Activated T-helper 1 cell treated with anti-CD3 and anti-CD28 coated beads, Interleukin-12 subunit alpha, Interleukin-12 subunit beta, Interleukin-2, Interleukin-4 antibody, amounts not matched to agents 30 ng/mL and 10 ng/mL and 1 ng/mL, durations not matched to agents 14 hours and 24 hours and 36 hours (primary cell): ENCODE measurements at regions of chr2 and their contacts with region 1.

Region 1: DNA sequence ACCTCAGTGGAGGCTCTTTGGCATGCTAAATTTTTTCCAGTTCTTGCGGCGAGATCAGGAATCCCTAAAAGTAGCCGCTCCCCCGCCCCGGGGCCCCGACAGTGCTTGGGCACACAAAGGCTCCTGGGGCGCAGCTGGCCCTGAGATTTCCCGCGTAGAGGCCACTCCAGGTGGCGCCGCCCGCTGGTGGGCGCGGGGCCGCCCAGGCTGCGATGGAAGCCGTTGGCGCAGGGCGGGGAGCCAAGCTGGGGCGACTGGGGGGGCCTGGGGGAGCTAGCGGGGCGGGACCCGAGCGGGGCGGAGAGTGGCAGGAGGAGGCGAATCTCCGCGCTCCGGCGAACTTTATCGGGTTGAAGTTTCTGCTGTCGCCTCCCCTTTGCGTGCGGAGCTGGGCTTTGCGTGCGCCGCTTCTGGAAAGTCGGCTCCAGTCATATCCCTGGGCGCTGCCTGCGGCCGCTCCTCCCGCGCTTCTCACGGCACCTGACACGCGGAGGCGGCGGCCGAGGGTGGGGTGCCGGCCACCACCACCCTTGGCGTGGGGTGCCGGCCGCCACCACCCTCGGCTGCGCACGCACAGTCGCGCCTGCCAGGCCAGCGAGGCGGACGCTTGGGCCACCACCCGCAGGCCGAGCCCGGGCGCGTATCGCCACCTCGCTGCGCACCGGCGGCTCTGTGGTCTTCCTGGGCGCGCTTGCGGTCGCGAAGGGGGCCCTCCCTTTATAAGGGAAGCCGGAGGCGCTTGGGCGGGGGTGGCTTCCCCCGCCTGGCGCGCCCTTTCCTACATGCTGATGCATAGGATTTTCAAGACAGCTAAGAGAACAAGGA is 867 bp upstream of the CYP1B1 start:
- DNase-seq: peak; percentile 63
- H3K4me3 Mint-ChIP-seq: peak overlapping the region; percentile 80
- H3K27ac Mint-ChIP-seq: peak overlapping the region; percentile 84
- H3K4me1 Mint-ChIP-seq: peaks cover 51% of the 10 kb centered on the region
- H3K27me3 Mint-ChIP-seq: peaks cover 38% of the 10 kb centered on the region

Region 2: GRCh38 chr2:37925063-37925897 is 151.5 kb before region 1 on chr2 and contains the start of gene RMDN2:
- intact Hi-C with region 1: loop called (anchors 10 kb)
- DNase-seq: peak; percentile 70
- H3K4me3 Mint-ChIP-seq: peak within 1 kb of the TSS; percentile 88
- H3K27ac Mint-ChIP-seq: peak within 1 kb of the TSS; percentile 76
- H3K4me1 Mint-ChIP-seq: peaks cover 9% of the 10 kb centered on the region
- H3K27me3 Mint-ChIP-seq: peaks cover 40% of the 10 kb centered on the region
- total RNA-seq, gene RMDN2: 1.3 and 2.2 TPM in 2 replicates

Region 3: GRCh38 chr2:38037757-38038621 is 38.8 kb before region 1 on chr2:
- intact Hi-C with region 1: loop called (anchors 1 kb)
- DNase-seq: peak; percentile 5
- H3K4me3 Mint-ChIP-seq: peak overlapping the region; percentile 71
- H3K27ac Mint-ChIP-seq: peak overlapping the region; percentile 91
- H3K4me1 Mint-ChIP-seq: peaks cover 22% of the 10 kb centered on the region
- H3K27me3 Mint-ChIP-seq: peaks cover 22% of the 10 kb centered on the region

Region 4: DNA sequence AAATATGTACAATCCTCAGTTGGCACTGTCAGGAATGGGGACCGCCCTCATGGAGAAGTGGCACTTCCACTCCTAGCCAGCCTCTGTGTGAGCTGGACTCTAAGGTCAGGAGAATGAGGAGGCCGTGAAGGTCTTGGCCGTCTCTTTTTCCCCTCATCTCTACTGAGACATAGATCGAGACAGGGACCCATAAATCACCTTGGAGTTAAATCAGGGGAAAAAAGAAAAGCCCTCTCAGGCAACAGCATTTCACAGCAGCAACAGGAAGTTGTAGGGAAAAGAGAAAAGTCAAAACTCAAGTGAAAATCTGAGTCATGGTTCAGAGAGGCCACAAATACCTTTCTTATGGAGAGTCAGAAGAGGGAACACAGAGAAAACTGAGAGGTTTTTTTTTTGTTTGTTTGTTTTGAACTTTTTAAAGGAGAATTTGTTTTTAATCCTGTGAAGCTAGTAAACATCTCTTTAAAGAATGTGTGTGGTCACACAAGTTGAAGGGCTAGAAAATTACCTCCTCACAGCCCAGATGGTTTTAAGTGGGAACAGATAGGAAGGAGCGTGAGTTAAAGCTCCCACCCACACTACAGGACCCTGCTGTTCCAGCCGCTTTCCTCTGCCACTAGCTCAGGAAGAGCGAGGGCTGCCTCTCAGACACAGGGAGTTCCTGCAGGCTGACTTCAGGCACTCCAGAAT is 29.7 kb after region 1 on chr2:
- intact Hi-C with region 1: loop called (anchors 2 kb)
- DNase-seq: no peak
- H3K4me3 Mint-ChIP-seq: peak overlapping the region; percentile 53
- H3K27ac Mint-ChIP-seq: peak overlapping the region; percentile 57
- H3K4me1 Mint-ChIP-seq: peaks cover 27% of the 10 kb centered on the region
- H3K27me3 Mint-ChIP-seq: no peaks in the 10 kb centered on the region

Region 5: GRCh38 chr2:38185012-38185491 is 108.2 kb after region 1 on chr2:
- intact Hi-C with region 1: loop called (anchors 2 kb)
- DNase-seq: no peak
- H3K4me3 Mint-ChIP-seq: no peak overlapping the region
- H3K27ac Mint-ChIP-seq: no peak overlapping the region
- H3K4me1 Mint-ChIP-seq: peaks cover 18% of the 10 kb centered on the region
- H3K27me3 Mint-ChIP-seq: peaks cover 18% of the 10 kb centered on the region

Region 6: GRCh38 chr2:38274286-38275276 is 197.8 kb after region 1 on chr2:
- intact Hi-C with region 1: loop called (anchors 1 kb)
- DNase-seq: no peak
- H3K4me3 Mint-ChIP-seq: no peak overlapping the region
- H3K27ac Mint-ChIP-seq: no peak overlapping the region
- H3K4me1 Mint-ChIP-seq: peaks cover 12% of the 10 kb centered on the region
- H3K27me3 Mint-ChIP-seq: peaks cover 4% of the 10 kb centered on the region